HEK293T (cell line): ENCODE measurements at regions of chr16 and their contacts with region 1.

Region 1: GRCh38 chr16:55465077-55465896 is 13.7 kb upstream of the MMP2 start:
- DNase-seq: peak; percentile 82

Region 2: GRCh38 chr16:55539049-55539448 is 73.8 kb after region 1 on chr16:
- CTCF ChIA-PET with region 1: interaction called, 10 read pairs
- POLR2A ChIA-PET with region 1: no interaction called
- DNase-seq: no peak

Region 3: DNA sequence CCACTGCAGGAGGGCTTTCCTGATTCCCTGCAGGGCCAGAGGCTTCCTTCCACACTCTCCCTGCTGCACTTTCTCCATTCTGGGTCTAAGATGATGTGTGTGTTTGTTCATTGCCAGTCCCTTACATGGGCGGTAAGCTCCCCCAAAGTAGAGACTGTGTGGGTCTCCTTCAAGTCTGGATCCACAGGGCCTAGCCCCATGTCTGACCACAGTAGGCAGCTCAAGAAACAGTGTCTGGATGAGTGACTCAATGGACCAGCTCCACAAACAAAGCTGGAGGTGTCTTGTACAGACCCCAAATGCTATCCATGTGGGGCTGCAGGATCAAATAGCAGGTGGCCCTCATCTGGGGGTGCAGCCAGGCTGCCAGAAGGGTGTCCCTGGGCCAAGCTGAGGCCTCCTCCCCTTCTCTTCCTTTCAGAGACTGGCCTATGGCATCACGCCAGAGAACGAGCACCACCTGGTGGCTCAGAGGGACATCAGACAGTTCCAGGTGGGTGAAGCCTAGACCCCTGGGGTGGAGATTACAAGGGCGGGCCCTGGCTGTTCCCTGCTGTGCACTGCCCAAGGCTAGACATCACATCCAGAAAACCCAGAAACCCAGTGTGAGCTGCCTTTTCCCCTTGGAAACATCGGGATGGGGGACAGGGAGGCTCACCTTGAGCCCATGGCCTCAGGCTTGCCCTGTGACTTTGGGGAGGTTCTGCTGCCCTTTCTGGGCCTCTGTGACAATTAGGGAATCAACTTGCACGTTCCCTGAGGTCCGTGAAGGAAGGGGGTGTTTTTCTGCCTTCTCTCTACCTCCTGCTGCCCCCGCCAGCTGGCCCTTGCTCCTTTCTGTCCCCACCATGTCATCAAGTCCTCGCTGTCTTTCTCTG is 236.4 kb after region 1 on chr16:
- CTCF ChIA-PET with region 1: interaction called, 47 read pairs
- POLR2A ChIA-PET with region 1: no interaction called
- DNase-seq: peak; percentile 67

Region 4: DNA sequence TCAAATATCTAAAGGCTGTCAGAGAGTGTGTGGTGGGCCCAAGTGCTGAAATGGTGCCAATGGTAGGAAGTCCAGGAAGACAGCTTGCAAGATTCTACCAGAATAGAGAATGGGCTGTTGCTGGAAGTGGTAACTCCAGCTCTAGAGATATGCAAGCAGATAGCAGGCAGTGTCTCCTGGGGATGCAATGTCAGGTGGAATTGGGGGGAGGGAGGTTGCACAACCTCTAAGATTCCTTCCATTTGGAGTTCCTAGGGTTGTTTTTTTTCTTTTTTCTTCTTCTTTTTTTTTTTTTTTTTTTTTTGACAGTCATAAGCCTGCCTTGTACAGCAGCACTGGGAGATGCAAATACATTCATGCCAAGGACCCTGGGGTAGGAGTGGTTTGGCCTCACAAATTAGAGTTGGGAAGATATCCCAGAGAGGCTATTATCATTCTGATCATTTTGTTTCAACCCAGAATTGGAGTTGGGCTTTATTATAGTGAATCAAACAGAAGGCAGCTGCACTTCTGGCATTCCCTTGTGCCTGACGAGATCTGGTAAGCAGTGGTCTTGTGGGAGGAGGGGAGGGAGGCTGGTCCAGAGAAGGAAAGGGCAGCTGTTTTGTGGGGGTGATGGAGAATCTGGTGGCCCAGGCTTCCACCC is 241.6 kb after region 1 on chr16:
- CTCF ChIA-PET with region 1: interaction called, 47 read pairs
- POLR2A ChIA-PET with region 1: no interaction called
- DNase-seq: no peak

Region 5: DNA sequence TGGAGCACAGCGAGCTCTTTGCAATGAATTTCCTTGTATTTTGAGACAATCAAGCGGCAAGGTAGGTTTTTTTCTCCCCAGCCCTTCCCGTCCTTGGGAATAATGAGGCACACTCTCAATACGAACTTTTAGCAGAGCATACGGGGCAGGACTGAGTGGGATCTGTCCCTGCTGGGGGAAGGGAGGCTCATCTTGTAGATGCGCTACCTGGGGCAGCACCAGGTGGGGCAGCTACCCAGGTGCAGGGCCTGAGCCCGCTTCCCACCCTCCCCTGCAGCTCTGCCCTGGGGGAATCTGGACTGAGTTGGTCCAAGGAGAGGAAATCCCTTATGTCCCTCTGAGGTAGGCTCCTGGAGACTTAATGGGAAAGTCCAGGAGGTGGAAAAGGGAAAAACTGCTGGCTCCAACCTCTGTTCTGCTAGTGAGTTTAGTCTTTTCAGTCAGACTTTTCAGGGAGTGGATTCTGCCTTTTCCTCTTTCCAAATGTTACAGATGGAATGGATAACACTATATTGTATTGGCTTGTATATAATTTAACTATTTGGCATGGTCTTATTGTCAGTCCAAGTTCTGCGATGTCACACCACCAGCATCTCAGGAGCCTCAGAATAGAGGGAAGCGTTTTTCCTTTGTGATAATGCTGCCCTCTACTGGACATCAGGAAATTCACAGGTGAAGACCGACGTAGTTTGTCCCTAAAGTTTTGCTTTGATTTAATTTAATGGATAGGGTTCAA is 377.2 kb after region 1 on chr16:
- CTCF ChIA-PET with region 1: interaction called, 11 read pairs
- POLR2A ChIA-PET with region 1: no interaction called
- DNase-seq: peak; percentile 52